AG04450 (cell line): ENCODE measurements at regions of chr15 and their contacts with region 1.

Region 1: DNA sequence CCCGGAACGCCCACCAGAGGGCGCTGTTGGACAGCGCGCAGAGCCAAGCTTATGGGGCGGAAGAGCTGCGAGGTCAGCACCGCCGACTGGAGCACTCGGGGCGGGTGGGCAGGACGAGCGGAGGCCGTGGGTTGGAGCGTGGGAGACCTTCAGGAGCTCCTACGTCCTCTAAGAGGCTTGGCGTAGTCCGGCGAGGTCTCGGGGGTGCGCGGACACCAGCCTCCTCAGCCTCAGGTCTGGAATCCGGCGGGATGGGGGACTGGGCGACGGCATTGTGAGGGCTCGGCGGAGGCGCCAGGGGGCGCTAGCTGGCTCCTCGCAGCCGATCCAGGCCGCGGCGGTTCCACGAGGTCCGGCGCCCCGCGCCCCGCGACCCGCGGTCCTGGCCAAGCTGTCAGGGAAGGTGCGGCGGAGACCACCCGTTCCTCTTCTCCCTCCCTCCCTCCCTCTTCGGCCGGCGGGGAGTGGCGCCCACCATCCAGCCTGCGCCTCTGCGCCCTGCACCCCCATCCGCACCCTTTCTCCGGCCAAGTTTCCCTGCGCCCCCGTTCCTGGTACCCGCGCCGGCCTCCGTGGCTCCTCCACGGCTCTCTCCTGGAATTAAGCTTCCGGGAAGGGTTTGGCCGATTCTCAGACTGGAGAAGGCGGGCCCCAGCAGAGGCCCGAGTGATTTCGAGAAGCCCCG is 24.3 kb upstream of the POLG start:
- DNase-seq: peak; percentile 34
- H3K4me3 ChIP-seq: peak overlapping the region; percentile 64
- H3K27ac ChIP-seq: no peak overlapping the region
- H3K27me3 ChIP-seq: peaks cover 73% of the 10 kb centered on the region
- CTCF ChIP-seq: peak; percentile 80

Region 2: DNA sequence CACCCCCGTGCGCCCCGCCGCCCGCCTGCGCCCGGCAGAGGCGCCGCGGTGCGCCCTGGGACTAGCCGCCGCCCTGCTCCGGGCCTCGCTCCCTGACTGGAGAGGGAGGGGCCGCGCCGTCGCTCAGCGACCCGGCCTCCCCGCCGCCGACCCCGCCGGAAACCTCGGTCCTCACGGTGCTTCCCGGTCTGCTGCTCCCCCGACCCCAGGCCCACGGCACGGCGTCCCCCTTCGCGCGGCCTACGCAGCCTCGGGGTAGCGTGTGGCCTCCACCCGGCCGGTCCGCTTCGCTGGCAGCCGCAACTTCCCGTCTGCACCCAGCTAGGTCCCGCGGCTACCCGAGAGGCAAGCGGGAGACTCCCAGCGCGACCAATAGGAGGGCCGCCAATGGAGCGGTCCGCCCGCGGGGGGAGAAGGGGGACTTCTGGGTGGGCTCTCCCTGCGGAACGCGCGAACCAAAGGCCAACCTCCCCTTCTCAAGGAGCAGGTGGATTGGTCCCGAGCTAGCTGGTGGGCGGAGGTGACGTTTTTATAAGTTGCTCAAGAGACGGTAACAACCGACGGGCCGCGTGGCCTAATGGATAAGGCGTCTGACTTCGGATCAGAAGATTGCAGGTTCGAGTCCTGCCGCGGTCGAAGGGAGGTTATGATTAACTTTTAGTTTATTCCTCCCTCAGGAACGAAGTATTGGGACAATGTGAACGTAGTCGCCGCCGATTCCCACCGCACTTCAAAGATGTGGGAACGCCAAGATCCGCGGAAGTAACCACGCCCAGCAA is 24.2 kb before region 1 on chr15 and contains the start of gene POLG:
- CTCF ChIA-PET with region 1: interaction called, 72 read pairs
- POLR2A ChIA-PET with region 1: no interaction called
- DNase-seq: peak; percentile 99
- H3K4me3 ChIP-seq: peak within 1 kb of the TSS; percentile 87
- H3K27ac ChIP-seq: peak within 1 kb of the TSS; percentile 61
- H3K27me3 ChIP-seq: peaks cover 12% of the 10 kb centered on the region
- CTCF ChIP-seq: no peak
- polyA plus RNA-seq, gene POLG: 13.7 and 17.5 TPM in 2 replicates

Region 3: GRCh38 chr15:89383365-89384175 is 24.7 kb after region 1 on chr15:
- CTCF ChIA-PET with region 1: interaction called, 45 read pairs
- POLR2A ChIA-PET with region 1: no interaction called
- DNase-seq: no peak
- H3K4me3 ChIP-seq: no peak overlapping the region
- H3K27ac ChIP-seq: no peak overlapping the region
- H3K27me3 ChIP-seq: peaks cover 72% of the 10 kb centered on the region
- CTCF ChIP-seq: no peak

Region 4: DNA sequence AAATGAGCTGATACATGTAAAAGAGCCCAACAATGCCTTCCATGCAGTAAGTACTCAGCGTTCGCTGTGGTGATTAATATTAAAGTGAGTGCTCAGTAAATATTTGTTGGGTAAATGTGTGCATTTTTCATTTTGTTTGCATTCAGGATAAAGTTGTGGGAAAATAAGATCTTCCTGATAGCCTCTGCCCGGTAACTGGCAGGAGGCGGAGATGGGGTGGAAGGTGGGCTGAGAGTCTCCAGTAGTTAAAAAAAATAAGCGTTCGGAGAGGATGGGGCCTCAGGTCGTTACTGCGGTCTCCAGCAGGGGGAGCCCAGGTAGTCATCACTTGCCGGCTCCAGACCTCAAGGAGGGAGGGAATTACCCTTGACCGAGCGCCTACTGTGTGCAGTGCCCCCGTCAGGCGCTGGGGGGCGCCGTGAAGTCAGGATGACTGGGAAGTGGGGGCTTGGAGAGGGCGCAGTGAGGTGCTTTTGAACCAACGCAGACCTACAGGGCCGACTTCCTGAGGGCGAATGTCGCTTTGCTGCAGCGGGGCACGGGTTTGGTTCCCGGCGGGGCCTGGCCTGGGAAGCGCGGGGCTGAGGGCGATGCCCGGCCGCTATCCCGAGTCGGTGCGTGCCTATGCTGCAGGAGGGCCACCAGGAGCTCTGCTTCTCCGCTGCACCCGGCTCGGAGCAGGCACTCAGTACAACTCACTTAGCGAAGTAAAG is 57.4 kb after region 1 on chr15:
- CTCF ChIA-PET with region 1: interaction called, 44 read pairs
- POLR2A ChIA-PET with region 1: no interaction called
- DNase-seq: no peak
- H3K4me3 ChIP-seq: no peak overlapping the region
- H3K27ac ChIP-seq: no peak overlapping the region
- H3K27me3 ChIP-seq: peaks cover 71% of the 10 kb centered on the region
- CTCF ChIP-seq: peak; percentile 71

Region 5: GRCh38 chr15:89455535-89455934 is 96.6 kb after region 1 on chr15:
- CTCF ChIA-PET with region 1: interaction called, 16 read pairs
- POLR2A ChIA-PET with region 1: no interaction called
- DNase-seq: no peak
- H3K4me3 ChIP-seq: no peak overlapping the region
- H3K27ac ChIP-seq: no peak overlapping the region
- H3K27me3 ChIP-seq: peaks cover 6% of the 10 kb centered on the region
- CTCF ChIP-seq: no peak

Region 6: GRCh38 chr15:89556413-89557262 is 197.7 kb after region 1 on chr15:
- CTCF ChIA-PET with region 1: interaction called, 12 read pairs
- POLR2A ChIA-PET with region 1: no interaction called
- DNase-seq: peak; percentile 58
- H3K4me3 ChIP-seq: no peak overlapping the region
- H3K27ac ChIP-seq: no peak overlapping the region
- H3K27me3 ChIP-seq: peaks cover 21% of the 10 kb centered on the region
- CTCF ChIP-seq: peak; percentile 82

Region 7: GRCh38 chr15:89587952-89588351 is 229.1 kb after region 1 on chr15:
- CTCF ChIA-PET with region 1: no interaction called
- POLR2A ChIA-PET with region 1: no interaction called
- DNase-seq: peak; percentile 24
- H3K4me3 ChIP-seq: no peak overlapping the region
- H3K27ac ChIP-seq: no peak overlapping the region
- H3K27me3 ChIP-seq: no peaks in the 10 kb centered on the region
- CTCF ChIP-seq: no peak